ENCODE measurements at regions of chr5 and their contacts with region 1.

Region 1: GRCh38 chr5:77239126-77239741 is 28.8 kb downstream of the PDE8B start:
- DNase-seq: peak; percentile 48
- H3K4me3 Mint-ChIP-seq: no peak overlapping the region
- H3K27ac Mint-ChIP-seq: no peak overlapping the region
- H3K4me1 Mint-ChIP-seq: peaks cover 9% of the 10 kb centered on the region
- H3K27me3 Mint-ChIP-seq: peaks cover 15% of the 10 kb centered on the region
- CTCF ChIP-seq: peak; percentile 70

Region 2: DNA sequence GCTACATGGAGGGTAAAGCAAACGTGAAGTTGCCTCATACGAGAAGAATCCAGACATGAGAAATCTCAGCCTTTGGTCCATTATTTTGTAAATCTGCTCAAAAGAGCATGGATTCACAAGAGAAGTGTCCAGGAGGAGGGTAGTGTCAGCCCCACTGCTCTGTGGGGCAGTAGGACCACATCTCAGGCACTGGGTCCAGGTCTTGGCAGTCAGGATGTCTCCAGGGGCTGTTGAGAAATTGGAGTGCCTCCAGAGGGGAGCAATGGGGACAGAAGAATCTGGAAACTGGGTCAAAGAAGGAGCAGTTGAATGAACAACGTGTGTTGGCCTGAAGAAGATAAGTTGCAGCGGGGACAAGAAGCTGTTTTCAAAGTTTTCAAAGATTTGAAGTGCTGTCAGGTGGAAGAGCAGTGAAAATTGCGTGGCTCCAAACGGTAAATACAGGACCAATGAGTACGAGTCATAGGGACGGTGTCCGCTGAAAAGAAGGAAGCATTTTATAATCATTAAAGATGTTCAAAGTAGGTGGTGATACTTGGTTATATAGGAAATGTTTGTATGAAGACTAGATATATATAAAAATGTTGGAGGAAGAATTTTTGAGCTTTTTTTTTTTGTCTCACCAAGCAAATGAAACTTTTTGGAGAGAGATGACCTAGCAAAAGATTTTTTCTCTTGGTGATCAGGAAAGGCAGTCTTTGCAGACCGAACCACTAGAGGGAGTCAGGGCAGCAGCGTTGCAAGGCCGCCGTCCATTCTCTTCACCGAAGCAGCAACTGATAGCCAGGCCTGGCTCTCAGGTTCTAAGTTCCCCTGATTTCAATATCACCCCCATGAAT is 95.0 kb before region 1 on chr5:
- CTCF ChIA-PET with region 1: interaction called, 3 read pairs
- intact Hi-C with region 1: loop called (anchors 1 kb)
- DNase-seq: peak; percentile 82
- H3K4me3 Mint-ChIP-seq: no peak overlapping the region
- H3K27ac Mint-ChIP-seq: no peak overlapping the region
- H3K4me1 Mint-ChIP-seq: no peaks in the 10 kb centered on the region
- H3K27me3 Mint-ChIP-seq: no peaks in the 10 kb centered on the region
- CTCF ChIP-seq: peak; percentile 82

Region 3: DNA sequence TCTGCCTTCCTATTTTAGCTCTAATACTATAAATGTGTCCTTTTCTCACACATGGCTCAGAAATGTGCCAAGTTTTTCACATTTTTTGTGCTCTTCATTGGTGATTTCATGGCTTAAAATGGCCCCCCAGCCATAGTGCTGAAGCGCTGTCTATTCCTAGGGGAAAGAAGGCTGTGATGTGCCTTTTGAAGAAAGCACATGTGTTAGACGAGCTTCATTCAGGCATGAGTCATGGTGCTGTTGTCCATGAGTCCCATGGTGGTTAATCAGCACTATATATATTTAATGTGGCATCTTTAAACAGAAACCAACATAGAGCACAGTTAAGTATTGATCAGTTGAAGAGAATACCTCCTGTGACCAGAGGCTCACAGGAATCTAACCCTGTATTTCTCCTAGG is 27.1 kb after region 1 on chr5:
- CTCF ChIA-PET with region 1: no interaction called
- intact Hi-C with region 1: no loop called
- DNase-seq: no peak
- H3K4me3 Mint-ChIP-seq: no peak overlapping the region
- H3K27ac Mint-ChIP-seq: no peak overlapping the region
- H3K4me1 Mint-ChIP-seq: no peaks in the 10 kb centered on the region
- H3K27me3 Mint-ChIP-seq: peaks cover 27% of the 10 kb centered on the region
- CTCF ChIP-seq: no peak

Region 4: DNA sequence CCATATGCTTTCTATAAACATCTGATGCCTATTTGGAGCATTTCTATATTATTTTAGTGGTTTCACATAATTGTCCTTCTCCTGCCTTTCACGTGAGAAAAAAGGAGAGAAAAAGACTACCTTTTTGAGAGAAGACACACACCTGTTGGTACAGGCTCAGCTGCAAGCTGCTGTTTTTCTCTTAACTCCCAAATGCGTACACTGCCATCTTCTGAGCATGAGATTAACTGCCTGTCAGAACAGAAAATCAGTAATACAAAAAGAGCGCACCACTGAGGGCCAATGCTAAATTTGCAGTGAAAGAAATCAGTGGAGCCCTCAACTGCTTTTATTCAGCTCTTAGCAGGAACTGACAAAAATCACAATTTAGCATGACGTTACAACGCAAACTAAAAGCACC is 198.0 kb after region 1 on chr5:
- CTCF ChIA-PET with region 1: no interaction called
- intact Hi-C with region 1: loop called (anchors 10 kb)
- DNase-seq: no peak
- H3K4me3 Mint-ChIP-seq: no peak overlapping the region
- H3K27ac Mint-ChIP-seq: no peak overlapping the region
- H3K4me1 Mint-ChIP-seq: no peaks in the 10 kb centered on the region
- H3K27me3 Mint-ChIP-seq: no peaks in the 10 kb centered on the region
- CTCF ChIP-seq: no peak

Region 5: DNA sequence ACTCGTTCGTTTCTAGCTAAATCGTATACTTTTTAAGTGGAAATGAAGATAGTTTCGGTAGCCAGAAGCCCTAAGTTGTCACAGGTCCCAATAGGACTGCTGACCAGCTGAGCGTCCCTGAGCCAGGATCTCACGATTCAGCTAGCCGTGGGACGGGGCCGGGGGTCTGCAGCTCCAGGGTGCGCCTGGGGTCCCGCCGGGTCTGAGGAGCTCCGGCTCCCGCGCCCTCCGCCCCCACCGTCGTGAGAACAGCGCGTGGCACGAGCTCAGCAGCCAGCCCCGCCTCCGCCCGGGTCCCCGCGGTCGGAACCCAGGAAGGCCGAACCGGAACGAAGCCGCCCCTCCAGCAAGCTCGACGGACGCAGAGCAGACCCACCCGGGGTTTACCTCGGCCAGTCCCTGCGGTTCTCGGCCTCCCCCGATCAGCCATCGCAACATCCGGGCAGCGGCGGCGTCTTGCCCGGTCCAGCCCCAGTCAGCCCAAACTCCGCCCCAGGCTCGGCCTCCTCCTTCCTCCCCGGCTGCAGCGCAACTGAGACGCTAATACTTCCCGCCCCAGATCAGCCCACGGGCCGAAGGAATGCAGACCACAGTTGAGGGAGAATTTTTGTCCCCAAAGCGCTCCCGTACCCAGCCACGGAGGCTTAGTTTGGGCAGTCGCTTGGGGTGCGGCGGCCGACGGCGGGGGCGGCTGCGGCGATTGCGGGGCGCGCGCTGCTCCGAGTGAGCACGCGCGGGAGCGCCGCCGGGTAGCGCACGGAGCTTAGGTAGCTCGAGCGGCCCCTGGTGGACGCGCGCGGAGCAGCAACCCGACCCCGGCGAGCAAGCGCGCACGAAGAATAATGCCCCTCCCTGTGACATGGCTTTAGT is 252.8 kb after region 1 on chr5 and contains the start of gene WDR41:
- CTCF ChIA-PET with region 1: interaction called, 5 read pairs
- intact Hi-C with region 1: loop called (anchors 10 kb)
- DNase-seq: peak; percentile 94
- H3K4me3 Mint-ChIP-seq: peak within 1 kb of the TSS; percentile 90
- H3K27ac Mint-ChIP-seq: peak within 1 kb of the TSS; percentile 88
- H3K4me1 Mint-ChIP-seq: no peaks in the 10 kb centered on the region
- H3K27me3 Mint-ChIP-seq: no peaks in the 10 kb centered on the region
- CTCF ChIP-seq: peak; percentile 87
- total RNA-seq, gene WDR41: 26.5 and 35.4 TPM in 2 replicates

Measured in Calu3 (cell line).